Cardiac septum (tissue), 1 donor: ENCODE measurements at regions of chr10 and their contacts with region 1.

Region 1: DNA sequence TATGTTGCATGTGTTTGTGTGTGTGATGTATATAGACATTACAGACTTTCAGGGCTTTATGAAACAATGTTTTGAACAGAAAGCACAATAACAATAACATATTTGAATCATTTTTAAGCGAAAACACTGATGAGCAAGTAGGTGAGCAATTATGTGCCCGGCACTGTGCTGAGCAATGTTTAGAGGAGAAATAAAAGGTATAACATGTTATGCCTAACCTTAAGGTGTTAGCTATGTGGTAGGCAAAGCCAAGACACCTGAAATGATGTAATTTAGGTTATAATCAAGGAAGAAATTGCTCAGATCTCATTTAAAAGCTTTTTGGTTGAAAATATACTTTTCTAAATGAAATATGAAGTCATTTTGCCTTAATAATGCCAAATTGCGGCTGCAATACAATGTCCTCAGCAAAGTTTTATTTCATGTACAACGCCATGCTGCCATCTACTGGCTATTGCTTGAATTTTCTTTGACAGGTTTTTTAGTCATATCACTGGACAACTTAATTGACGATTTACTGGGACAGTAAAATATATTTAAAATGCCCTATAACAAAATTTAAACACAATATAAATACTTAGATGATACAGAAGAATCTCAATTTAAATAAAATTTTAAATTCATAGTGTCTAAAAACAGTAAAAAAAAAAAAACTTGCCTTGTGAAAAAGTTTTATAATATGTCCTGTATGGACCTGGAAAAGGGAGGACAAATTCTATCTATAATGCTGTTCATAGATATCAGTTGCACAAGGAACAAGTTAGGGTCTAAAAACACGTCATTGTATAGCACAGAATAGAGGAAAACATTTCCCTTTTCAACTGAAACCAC is 131.1 kb upstream of the CDK1 start:
- DNase-seq: no peak

Region 2: GRCh38 chr10:60444494-60445064 is 202.6 kb before region 1 on chr10:
- intact Hi-C with region 1: loop called (anchors 2 kb)
- DNase-seq: no peak

Region 3: GRCh38 chr10:60549686-60550085 is 97.5 kb before region 1 on chr10:
- intact Hi-C with region 1: loop called (anchors 5 kb)
- DNase-seq: no peak

Region 4: GRCh38 chr10:60564475-60564874 is 82.7 kb before region 1 on chr10:
- intact Hi-C with region 1: no loop called
- DNase-seq: no peak

Region 5: DNA sequence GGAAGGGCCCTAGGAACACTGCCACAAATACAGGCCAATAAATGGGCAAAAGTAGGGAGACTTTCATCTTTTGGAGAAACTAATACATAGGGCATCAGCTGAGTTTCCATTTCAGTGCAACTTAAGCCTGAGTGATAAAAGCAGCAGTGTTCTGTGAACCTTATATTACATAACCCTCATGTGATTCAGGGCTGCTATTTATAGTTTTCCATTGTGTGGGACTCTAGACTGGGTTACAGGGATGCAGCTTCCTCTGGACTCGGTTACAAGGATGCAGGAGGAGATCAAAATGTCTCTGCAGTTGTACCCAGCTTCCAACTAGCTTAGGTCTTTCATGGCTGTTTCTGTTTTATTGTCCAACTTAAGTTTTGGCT is 163.6 kb after region 1 on chr10:
- intact Hi-C with region 1: no loop called
- DNase-seq: no peak

Region 6: DNA sequence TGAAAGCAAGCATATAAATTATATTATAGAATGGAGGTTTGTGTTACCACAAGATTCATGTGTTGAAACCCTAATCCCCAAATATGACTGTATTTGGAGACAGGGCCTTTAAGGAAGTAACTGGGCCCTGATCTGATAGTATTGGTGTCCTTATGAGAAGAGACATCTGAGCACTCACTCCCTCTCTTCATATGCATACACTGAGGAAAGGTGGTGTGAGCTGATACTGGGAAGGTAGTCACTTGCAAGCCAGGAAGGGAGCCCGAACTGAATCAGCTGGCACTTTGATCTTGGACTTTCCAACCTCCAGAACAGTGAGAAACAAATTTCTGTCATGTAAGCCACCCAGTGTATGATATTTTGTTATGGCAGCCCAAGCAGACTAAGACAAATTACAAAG is 363.7 kb after region 1 on chr10:
- intact Hi-C with region 1: no loop called
- DNase-seq: no peak